ENCODE measurements at regions of chr10 and their contacts with region 1.

Region 1: GRCh38 chr10:128419466-128420019 is 293.3 kb upstream of the MKI67 start:
- DNase-seq: no peak
- ATAC-seq: peak in 1 of 2 donors; percentile 31
- H3K4me3 ChIP-seq: no peak overlapping the region
- H3K27ac ChIP-seq: no peak overlapping the region
- H3K4me1 ChIP-seq: no peaks in the 10 kb centered on the region
- H3K27me3 ChIP-seq: no peaks in the 10 kb centered on the region

Region 2: DNA sequence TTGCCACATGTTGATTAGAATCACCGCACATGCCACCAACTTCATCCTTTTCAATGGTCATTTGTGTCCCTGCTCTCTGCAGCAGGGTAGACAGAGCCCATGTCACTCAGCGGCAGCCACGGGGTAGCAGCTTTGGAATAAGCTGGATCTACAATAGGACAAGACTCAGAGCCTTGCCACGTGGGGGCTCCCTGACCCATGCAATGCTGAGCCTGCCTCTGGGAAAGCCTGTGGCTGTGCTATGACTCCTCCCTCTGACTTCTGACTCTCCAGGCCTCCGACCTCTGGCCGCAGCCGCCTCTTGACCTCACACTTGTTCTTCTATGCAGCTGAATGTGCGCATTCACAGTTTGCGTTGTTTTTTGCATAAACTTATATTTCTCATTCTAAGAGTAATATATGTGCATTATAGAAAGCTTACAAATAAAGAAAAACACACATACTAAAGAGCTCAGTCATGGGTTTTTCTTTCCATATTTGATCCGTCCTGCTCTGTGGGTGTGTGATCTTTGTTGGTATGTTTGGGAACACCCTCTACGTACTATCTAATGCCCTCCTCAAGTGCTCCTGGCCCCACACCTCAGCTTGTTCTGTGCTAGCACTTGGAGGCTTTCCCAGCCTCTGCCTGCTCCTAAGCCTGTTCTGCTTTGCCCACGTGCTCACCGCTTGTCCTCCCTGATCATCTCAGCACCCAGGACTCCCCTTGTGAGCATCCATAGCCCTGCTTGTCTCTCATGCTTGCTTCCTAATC is 95.3 kb before region 1 on chr10:
- intact Hi-C with region 1: loop called in 2 of 4 experiments (anchors 10 kb)
- DNase-seq: peak; percentile 55 to 85 (median 77)
- ATAC-seq: peak; percentile 88 to 92
- H3K4me3 ChIP-seq: no peak overlapping the region
- H3K27ac ChIP-seq: no peak overlapping the region
- H3K4me1 ChIP-seq: no peaks in the 10 kb centered on the region
- H3K27me3 ChIP-seq: no peaks in the 10 kb centered on the region